Activated CD4-positive, alpha-beta T cell treated with anti-CD3 and anti-CD28 coated beads for 36 hours (primary cell): ENCODE measurements at regions of chr17 and their contacts with region 1.

Region 1: DNA sequence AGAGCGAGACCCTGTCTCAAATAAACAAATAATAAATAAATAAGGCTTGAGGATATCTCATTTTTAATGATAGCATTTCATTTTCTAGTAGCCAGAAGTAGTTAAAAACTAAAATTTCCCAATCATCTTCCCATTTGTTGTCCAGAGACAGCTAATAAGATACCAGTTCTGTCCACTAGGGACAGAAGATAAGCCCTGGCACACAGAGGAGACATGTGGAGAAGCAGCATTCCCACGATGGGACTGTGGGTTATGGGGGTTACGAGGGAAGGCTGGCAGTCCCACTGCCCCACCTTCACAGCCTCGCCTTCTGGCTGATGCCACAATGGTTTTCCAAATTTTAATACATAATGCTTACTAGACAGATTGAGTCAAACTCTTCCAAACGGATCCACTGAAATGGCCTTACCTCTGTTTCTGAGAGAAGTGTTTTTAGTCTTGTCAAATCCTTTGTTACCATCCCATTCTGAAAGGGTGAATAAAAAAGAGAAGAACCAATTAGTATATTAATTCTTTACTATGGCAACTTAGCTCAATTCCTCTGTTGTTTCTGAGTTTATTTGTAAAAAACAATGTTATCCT is 44.2 kb downstream of the HELZ start:
- DNase-seq: no peak
- ATAC-seq: no peak
- H3K4me3 Mint-ChIP-seq: no peak overlapping the region
- H3K27ac Mint-ChIP-seq: no peak overlapping the region
- H3K4me1 Mint-ChIP-seq: peaks cover 17% of the 10 kb centered on the region
- H3K27me3 Mint-ChIP-seq: no peaks in the 10 kb centered on the region

Region 2: GRCh38 chr17:67105213-67105612 is 95.6 kb before region 1 on chr17:
- CTCF ChIA-PET with region 1: no interaction called
- POLR2A ChIA-PET with region 1: no interaction called
- intact Hi-C with region 1: no loop called
- DNase-seq: no peak
- ATAC-seq: peak; percentile 53
- H3K4me3 Mint-ChIP-seq: no peak overlapping the region
- H3K27ac Mint-ChIP-seq: no peak overlapping the region
- H3K4me1 Mint-ChIP-seq: peaks cover 34% of the 10 kb centered on the region
- H3K27me3 Mint-ChIP-seq: no peaks in the 10 kb centered on the region

Region 3: DNA sequence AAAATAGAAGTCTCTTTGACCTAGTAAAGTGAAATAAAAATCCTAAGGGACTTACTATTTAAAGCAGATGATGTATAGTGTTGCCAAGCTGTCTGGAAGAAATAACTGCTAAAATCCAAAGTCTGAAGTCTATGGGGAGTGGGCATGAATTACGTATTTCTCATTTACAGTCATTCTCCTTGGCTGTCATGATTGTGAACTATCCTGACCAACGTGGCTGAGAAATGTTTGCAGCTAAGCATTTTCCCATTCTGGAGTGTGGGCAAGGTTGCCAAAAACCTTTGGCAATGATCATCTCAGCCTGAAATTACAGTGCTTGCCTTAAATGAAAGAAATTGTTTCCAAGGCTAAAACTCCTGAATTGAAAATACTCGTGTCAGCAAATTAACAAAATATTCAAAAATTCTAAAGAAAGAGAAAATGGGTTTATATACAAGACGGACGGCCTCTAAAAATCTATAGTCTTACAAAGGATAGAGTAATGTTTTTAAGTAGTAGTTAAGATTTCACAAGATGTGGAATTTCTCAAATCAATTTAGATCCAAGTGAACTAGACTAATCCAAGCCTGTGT is 79.4 kb before region 1 on chr17:
- CTCF ChIA-PET with region 1: no interaction called
- POLR2A ChIA-PET with region 1: no interaction called
- intact Hi-C with region 1: no loop called
- DNase-seq: no peak
- ATAC-seq: no peak
- H3K4me3 Mint-ChIP-seq: no peak overlapping the region
- H3K27ac Mint-ChIP-seq: no peak overlapping the region
- H3K4me1 Mint-ChIP-seq: peaks cover 5% of the 10 kb centered on the region
- H3K27me3 Mint-ChIP-seq: no peaks in the 10 kb centered on the region

Region 4: DNA sequence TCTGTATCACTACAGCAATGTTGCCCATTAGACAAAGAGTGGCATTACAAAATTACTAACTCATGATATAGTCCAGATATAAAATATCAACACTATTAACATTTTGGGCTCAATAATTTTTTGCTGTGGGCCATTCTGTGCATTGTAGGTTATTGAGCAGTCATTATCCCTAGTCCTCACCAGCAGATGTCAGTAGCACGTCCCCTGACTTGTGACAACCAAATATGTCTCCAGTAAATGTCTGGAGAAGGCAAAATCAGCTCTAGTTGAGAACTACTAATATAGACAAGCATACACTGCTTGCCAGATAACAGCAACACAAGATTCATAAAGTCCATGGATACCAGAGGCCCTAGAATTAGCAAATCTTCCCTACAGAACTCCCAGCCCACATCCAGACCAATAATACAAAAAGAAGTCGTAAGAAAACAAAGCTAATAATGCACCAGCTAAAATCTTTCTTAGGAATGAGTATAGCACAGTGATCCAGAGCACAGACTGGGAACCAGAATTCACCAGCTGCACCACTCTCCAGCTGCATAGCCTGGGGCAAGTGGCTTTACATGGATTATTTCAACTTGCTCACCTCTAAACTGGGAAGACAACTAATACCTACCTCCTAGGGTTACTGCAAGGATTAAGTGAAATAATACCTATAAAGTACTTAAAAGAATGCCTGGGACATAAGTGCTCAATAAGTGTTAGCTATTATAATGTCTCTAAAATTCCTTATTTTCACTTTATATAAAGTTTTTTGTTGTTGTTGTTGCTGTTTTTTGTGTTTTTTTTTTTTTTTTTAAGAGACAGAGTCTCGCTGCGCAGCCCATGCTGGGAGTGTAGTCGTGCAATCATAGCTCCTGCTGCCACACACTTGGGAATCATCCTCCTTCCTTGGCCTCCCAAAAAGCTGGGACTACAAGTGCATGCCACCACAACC is 20.5 kb after region 1 on chr17:
- CTCF ChIA-PET with region 1: interaction called, 13 read pairs
- POLR2A ChIA-PET with region 1: no interaction called
- intact Hi-C with region 1: no loop called
- DNase-seq: peak; percentile 44
- ATAC-seq: peak; percentile 68
- H3K4me3 Mint-ChIP-seq: no peak overlapping the region
- H3K27ac Mint-ChIP-seq: no peak overlapping the region
- H3K4me1 Mint-ChIP-seq: peaks cover 31% of the 10 kb centered on the region
- H3K27me3 Mint-ChIP-seq: no peaks in the 10 kb centered on the region